ENCODE measurements at regions of chr5 and their contacts with region 1.

Region 1: GRCh38 chr5:149474212-149474618 is 77.0 kb downstream of the CSNK1A1 start:
- DNase-seq: peak; percentile 87
- H3K27ac ChIP-seq: peak overlapping the region; percentile 89
- CTCF ChIP-seq: no peak

Region 2: DNA sequence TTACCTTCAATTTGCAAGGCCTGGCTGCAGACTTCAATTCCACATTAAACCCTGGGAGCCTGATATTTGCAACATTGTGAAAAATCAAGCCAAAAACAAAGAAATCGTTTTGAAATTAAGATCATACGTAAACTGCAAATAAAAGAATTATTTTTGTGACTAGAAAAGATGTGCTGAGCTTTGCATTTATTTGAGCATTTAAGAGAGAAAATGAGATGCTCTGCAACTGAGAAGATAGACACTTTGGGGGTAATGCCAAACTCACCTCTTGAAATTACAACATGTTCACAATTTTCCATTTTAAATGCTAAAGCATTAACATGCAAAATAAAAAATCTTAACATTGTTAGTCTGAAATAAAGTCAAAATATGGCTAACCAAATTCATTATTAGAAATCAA is 30.5 kb after region 1 on chr5:
- CTCF ChIA-PET with region 1: interaction called, 10 read pairs
- POLR2A ChIA-PET with region 1: no interaction called
- DNase-seq: no peak
- H3K27ac ChIP-seq: no peak overlapping the region
- CTCF ChIP-seq: no peak

Measured in RWPE1 (cell line).